Dendritic cell treated with granulocyte-macrophage colony-stimulating factor and Interleukin-4, amounts not matched to agents 40 ng/mL and 50 ng/mL, for 4 days (primary cell): ENCODE measurements at regions of chr3 and their contacts with region 1.

Region 1: DNA sequence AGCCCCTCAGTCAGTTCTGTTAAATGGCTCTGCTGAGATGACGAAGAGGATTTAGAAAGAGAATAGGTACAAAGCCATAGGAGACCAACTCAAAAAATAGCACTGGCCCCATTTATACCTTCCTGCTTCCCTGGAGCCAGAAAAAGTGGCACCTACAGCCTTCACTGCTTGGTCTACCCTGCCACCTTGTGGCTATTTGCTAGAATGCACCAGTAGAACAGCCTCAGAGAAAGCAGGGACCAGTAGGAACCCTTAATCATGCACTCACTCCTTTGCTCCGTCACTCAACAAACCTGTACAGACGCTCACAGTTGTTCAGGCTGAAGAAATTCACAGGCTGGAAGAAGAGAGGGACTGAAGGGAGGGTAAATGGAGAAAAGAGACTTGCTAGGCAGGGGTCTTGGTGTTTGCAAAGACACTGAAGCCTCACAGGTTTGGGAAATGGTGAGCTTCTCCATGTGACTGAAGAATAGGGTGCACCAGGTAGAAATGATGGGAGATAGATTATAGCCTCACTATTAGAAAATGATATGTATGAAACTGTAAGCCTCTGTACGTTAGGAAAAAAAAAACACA is 12.1 kb upstream of the RTP2 start:
- H3K4me3 Mint-ChIP-seq: no peak overlapping the region
- H3K27ac Mint-ChIP-seq: no peak overlapping the region
- H3K4me1 Mint-ChIP-seq: peaks cover 14% of the 10 kb centered on the region
- H3K27me3 Mint-ChIP-seq: no peaks in the 10 kb centered on the region

Region 2: DNA sequence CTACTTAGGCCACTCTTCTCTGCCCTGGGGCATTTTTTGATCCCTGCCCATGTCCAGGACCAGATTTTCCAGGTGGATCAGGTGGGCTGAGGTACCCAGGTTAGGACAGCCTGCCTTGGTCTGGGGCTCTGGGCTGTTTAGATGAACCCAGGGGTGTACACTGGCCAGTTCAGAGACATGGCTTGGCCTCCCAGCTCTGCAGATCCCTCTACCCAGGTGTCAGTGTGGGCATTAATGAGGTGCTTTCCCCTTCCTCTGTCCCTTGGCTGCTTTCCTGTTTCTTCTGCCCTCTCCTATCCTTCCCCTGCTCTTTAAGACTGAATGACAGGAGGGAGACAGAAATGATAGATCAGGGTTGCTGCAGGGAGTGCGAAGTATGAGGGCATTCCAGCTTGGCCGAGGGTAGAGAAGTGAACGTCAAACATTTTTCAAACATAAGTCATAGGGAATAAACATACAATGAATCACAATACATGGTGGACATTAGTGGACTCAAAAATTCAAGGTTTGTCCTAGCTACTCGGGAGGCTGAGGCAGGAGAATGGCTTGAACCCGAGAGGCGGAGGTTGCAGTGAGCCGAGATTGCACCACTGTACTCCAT is 486.7 kb before region 1 on chr3:
- intact Hi-C with region 1: loop called (anchors 10 kb)
- H3K4me3 Mint-ChIP-seq: no peak overlapping the region
- H3K27ac Mint-ChIP-seq: no peak overlapping the region
- H3K4me1 Mint-ChIP-seq: no peaks in the 10 kb centered on the region
- H3K27me3 Mint-ChIP-seq: peaks cover 5% of the 10 kb centered on the region

Region 3: DNA sequence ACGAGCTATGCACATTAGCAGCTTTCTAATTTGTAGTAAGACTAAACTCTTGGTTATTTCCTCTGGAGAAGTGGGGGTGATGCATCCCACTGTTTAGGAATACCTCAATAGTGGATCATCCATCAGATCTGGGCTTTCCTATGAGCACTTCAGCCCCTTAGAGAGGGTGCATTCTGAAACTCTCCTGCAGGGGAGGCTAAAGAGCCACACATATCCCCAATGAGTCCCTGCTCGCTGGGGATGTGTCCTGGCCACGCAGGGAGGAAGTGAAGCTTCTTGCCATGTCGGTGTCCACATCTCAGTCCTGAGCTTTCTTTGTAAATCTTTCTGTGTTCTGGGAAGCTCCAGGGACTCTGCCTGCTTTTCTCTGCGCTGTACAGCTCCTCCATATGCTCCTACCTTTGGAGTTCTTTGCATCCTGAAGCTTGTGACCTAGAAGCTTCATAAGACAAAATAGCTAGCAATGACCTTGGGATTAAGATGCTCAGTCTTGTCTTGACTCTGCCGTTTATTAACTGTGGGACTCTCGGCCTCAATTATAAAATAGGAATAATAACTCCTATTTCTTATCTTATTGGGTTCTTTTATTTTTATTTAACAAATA is 394.7 kb before region 1 on chr3:
- intact Hi-C with region 1: loop called (anchors 1 kb)
- H3K4me3 Mint-ChIP-seq: no peak overlapping the region
- H3K27ac Mint-ChIP-seq: no peak overlapping the region
- H3K4me1 Mint-ChIP-seq: no peaks in the 10 kb centered on the region
- H3K27me3 Mint-ChIP-seq: peaks cover 16% of the 10 kb centered on the region

Region 4: GRCh38 chr3:187616307-187616972 is 98.1 kb before region 1 on chr3:
- intact Hi-C with region 1: loop called (anchors 1 kb)
- H3K4me3 Mint-ChIP-seq: no peak overlapping the region
- H3K27ac Mint-ChIP-seq: no peak overlapping the region
- H3K4me1 Mint-ChIP-seq: no peaks in the 10 kb centered on the region
- H3K27me3 Mint-ChIP-seq: peaks cover 4% of the 10 kb centered on the region

Region 5: GRCh38 chr3:187667526-187667925 is 47.0 kb before region 1 on chr3:
- intact Hi-C with region 1: no loop called
- H3K4me3 Mint-ChIP-seq: no peak overlapping the region
- H3K27ac Mint-ChIP-seq: no peak overlapping the region
- H3K4me1 Mint-ChIP-seq: peaks cover 8% of the 10 kb centered on the region
- H3K27me3 Mint-ChIP-seq: peaks cover 33% of the 10 kb centered on the region

Region 6: DNA sequence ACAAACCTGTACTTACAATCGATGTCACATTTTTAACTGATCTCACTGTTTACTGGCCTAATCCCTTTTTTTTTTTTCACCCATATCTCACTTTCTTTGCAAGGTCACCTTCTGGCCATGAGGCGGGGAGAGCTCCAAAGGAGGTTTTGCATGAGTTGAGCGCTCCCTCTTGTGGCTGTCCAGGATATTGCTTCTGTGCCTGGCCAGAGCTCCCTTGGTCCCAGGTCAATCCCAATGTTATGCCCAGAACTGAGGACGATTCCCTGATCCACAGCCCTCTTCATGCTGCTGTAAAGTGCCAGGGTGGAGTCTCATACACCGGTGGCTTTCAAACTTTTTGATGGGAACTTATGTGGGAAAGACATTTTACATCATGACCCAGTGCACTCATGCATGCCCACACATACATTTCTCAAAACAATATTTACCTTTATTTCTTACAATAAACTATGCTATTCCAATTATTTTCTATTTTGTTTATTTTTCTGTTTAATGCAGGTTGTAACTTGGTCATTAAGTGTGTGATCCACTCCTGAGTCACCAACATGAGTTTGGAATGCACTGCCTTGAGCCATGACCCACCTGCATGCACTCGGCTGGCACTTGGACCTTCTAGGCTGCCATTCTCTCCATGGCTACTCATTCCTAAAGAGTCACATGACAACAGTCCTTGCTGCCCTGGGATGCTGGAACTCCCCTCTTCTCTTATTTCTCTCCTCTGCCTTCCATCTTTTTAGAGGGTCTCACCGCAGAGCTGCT is 34.7 kb before region 1 on chr3:
- intact Hi-C with region 1: loop called (anchors 2 kb)
- H3K4me3 Mint-ChIP-seq: no peak overlapping the region
- H3K27ac Mint-ChIP-seq: no peak overlapping the region
- H3K4me1 Mint-ChIP-seq: peaks cover 5% of the 10 kb centered on the region
- H3K27me3 Mint-ChIP-seq: peaks cover 23% of the 10 kb centered on the region